HepG2 (cell line): ENCODE measurements at regions of chr19 and their contacts with region 1.

Region 1: GRCh38 chr19:15418588-15419412 is at the start of gene AKAP8L:
- DNase-seq: peak; percentile 99
- ATAC-seq: peak; percentile 98
- H3K4me3 ChIP-seq: peak within 1 kb of the TSS; percentile 84 to 97 (median 85)
- H3K27ac ChIP-seq: peak within 1 kb of the TSS; percentile 81
- H3K4me1 ChIP-seq: peaks cover 34% of the 10 kb centered on the region
- H3K27me3 ChIP-seq: no peaks in the 10 kb centered on the region; a peak in 1 of 5 replicates
- CTCF ChIP-seq: peak; percentile 92
- EP300 ChIP-seq: peak in 1 of 2 experiments; percentile 8; a peak in 1 of 4 replicates
- POLR2A ChIP-seq: peak; percentile 97 to 98
- RAD21 ChIP-seq: peak; percentile 91
- total RNA-seq, gene AKAP8L: 27.3 and 48.2 TPM in 2 replicates

Region 2: GRCh38 chr19:15264061-15264932 is 154.5 kb before region 1 on chr19:
- CTCF ChIA-PET with region 1: no interaction called
- POLR2A ChIA-PET with region 1: no interaction called
- in situ Hi-C with region 1: no loop called
- intact Hi-C with region 1: loop called (anchors 5 kb)
- DNase-seq: peak; percentile 56
- ATAC-seq: peak; percentile 74
- H3K4me3 ChIP-seq: no peak overlapping the region
- H3K27ac ChIP-seq: no peak overlapping the region
- H3K4me1 ChIP-seq: peaks cover 23% of the 10 kb centered on the region
- H3K27me3 ChIP-seq: no peaks in the 10 kb centered on the region
- CTCF ChIP-seq: peak; percentile 91
- EP300 ChIP-seq: no peak
- POLR2A ChIP-seq: no peak
- RAD21 ChIP-seq: peak; percentile 83

Region 3: DNA sequence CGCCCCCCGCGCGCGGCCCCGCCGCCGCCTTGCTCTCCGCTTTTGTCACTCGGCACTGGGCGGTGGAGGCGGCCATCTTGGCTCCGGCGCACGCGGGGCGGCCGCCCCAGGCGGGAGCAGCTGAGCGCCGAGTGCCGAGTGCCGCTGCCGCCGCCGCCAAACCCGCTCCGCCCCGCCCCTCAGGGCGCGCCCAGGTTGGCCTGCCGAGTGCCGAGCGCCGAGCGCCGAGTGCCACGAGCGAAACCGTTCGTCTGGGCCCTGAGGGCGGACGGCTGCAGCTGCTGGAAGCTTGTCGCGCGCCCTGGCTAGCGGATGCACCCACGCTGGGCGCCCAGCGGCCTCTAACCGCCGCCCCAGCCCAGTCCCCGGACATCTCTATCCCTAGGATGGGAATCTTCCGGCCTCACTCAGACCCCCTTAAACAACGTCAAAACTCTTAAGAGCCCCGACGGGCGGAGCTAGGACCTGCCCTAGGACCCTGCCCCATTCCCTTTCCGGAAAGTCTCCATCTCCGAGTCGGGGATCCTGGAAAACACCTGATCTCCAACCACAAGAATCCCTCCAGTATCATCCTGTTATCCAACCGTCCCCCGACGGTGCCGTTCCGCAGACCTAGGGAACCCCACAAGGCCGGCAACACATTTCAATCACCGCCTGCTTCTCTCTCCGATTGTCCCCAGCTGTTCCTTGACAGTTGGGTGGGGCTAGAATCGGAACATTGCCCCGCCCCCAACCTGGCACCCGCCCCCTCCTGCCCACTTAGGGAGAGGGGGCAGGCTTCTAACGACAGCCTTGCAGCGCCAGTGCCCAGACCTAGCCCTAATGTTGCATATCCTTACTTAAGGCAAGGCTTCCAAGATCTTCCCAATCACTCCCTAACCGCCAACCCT is 14.1 kb after region 1 on chr19:
- CTCF ChIA-PET with region 1: interaction called, 5 read pairs
- POLR2A ChIA-PET with region 1: interaction called, 34 read pairs
- in situ Hi-C with region 1: no loop called
- intact Hi-C with region 1: no loop called
- DNase-seq: peak; percentile 65
- ATAC-seq: peak; percentile 67
- H3K4me3 ChIP-seq: peak overlapping the region; percentile 64 to 88 (median 85); a peak in 5 of 6 replicates
- H3K27ac ChIP-seq: peak overlapping the region; percentile 64
- H3K4me1 ChIP-seq: peaks cover 38% of the 10 kb centered on the region
- H3K27me3 ChIP-seq: no peaks in the 10 kb centered on the region; a peak in 2 of 5 replicates
- CTCF ChIP-seq: no peak; the same call in 1 of the 2 replicates
- EP300 ChIP-seq: no peak; a peak in 1 of 4 replicates
- POLR2A ChIP-seq: peak; percentile 58 to 64
- RAD21 ChIP-seq: peak; percentile 67

Region 4: GRCh38 chr19:15452111-15453047 is 33.6 kb after region 1 on chr19:
- CTCF ChIA-PET with region 1: no interaction called
- POLR2A ChIA-PET with region 1: interaction called, 18 read pairs
- in situ Hi-C with region 1: no loop called
- intact Hi-C with region 1: no loop called
- DNase-seq: peak; percentile 69
- ATAC-seq: peak; percentile 64
- H3K4me3 ChIP-seq: peak overlapping the region in 2 of 3 experiments; percentile 34 to 61; a peak in 2 of 6 replicates
- H3K27ac ChIP-seq: no peak overlapping the region
- H3K4me1 ChIP-seq: peaks cover 37% of the 10 kb centered on the region
- H3K27me3 ChIP-seq: no peaks in the 10 kb centered on the region
- CTCF ChIP-seq: no peak
- EP300 ChIP-seq: no peak
- POLR2A ChIP-seq: peak in 1 of 2 experiments; percentile 35; a peak in 1 of 4 replicates
- RAD21 ChIP-seq: no peak

Region 5: DNA sequence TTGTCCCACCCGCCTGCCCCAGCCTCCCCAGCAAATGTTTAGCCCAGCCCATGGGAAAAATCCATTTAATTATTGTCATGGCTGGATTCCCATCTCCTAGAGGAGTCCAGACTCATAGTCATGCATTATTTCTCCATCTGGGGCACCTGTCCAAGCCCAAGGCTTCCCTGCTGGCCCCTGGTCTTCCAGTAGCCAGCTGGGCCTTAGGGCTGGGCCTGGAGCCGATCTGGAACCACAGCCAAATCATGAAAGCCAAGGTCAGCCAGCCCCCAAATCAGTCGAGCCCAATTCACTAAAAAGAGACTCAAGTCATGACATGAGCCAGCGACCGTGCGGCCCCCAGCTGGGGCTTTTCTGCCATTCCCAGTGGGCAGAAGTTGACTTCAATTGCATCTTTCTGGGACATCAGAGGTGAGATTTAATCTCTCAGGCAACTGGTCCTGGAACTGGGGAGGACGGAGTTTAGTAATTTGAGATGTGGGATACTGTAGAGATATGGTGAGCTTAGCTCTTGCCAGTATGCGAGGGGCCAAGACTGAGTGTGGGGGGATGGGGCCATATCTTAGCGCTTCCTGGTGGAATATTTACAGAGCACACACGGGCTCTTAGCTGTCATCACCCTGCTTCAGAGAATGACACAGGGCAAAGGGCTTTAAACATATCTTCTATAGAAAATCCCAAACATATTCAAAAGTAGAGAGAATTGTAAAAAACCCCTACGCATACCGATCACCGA is 69.9 kb after region 1 on chr19:
- CTCF ChIA-PET with region 1: no interaction called
- POLR2A ChIA-PET with region 1: no interaction called
- in situ Hi-C with region 1: no loop called
- intact Hi-C with region 1: no loop called
- DNase-seq: no peak
- ATAC-seq: no peak
- H3K4me3 ChIP-seq: no peak overlapping the region
- H3K27ac ChIP-seq: no peak overlapping the region
- H3K4me1 ChIP-seq: peaks cover 13% of the 10 kb centered on the region
- H3K27me3 ChIP-seq: no peaks in the 10 kb centered on the region
- CTCF ChIP-seq: no peak
- EP300 ChIP-seq: no peak
- POLR2A ChIP-seq: no peak
- RAD21 ChIP-seq: no peak